H1 (cell line): ENCODE measurements at regions of chr22 and their contacts with region 1.

Region 1: DNA sequence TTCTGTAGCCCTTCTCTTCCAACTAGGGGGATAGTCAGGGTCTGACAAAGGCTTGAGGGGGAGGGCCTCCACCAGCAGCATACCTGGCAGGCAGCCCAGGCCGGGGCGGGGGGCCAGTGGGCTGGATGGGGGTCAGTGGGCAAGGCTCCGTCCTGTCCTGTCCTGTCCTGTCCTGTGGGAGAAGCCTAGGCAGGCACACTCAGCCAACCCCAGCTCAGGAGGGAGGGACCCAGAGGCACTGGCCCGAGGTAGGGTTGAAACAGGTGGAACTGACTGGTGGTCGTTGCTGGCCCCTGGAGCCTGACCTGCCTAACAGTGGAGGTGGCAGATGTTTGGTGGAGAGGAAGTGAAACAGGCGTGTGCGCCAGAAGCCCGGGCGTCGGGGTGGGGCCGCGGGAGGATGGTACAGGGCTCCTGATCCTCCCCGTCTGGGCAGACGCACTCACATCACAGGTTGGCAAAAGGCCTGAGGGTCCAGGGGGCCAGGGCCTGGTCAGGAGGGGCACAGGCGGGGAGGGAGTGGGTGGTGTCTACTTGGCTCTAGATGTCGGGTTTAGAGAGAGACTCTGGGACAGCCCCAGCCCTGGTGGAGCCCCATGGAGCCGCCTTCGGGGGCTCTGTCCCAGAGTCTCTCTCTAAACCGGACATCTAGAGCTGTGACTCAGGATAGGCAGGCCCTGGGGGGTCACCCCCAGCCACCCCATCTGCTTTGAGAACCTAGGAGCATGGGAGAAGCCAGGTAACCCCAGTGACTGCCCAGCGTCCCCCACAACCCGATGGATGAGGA is 32.5 kb upstream of the GRAMD4 start:
- DNase-seq: no peak
- H3K4me3 ChIP-seq: no peak overlapping the region
- H3K27ac ChIP-seq: no peak overlapping the region
- H3K4me1 ChIP-seq: peaks cover 0 to 30% (median 18%) of the 10 kb centered on the region in 4 experiments; a peak in 6 of 7 replicates
- H3K27me3 ChIP-seq: no peaks in the 10 kb centered on the region
- CTCF ChIP-seq: no peak
- EP300 ChIP-seq: no peak
- POLR2A ChIP-seq: no peak
- RAD21 ChIP-seq: no peak

Region 2: GRCh38 chr22:46598737-46599424 is 11.2 kb after region 1 on chr22:
- CTCF ChIA-PET with region 1: interaction called, 15 read pairs
- POLR2A ChIA-PET with region 1: interaction called, 4 read pairs
- DNase-seq: no peak
- H3K4me3 ChIP-seq: no peak overlapping the region
- H3K27ac ChIP-seq: no peak overlapping the region
- H3K4me1 ChIP-seq: peaks cover 0 to 4% (median 3%) of the 10 kb centered on the region in 4 experiments; a peak in 3 of 7 replicates
- H3K27me3 ChIP-seq: no peaks in the 10 kb centered on the region
- CTCF ChIP-seq: no peak
- EP300 ChIP-seq: no peak
- POLR2A ChIP-seq: no peak
- RAD21 ChIP-seq: no peak